CD4-positive, alpha-beta memory T cell (primary cell): ENCODE measurements at regions of chr12 and their contacts with region 1.

Region 1: GRCh38 chr12:110431957-110432587 is 18.1 kb downstream of the ARPC3 start:
- DNase-seq: no peak
- H3K4me3 ChIP-seq: peak overlapping the region in 1 of 2 donors; percentile 43
- H3K4me3 Mint-ChIP-seq: no peak overlapping the region
- H3K27ac ChIP-seq: no peak overlapping the region
- H3K27ac Mint-ChIP-seq: peak overlapping the region in 4 of 7 donors; percentile 18 to 99 (median 55)
- H3K4me1 ChIP-seq: peaks cover 4% of the 10 kb centered on the region
- H3K4me1 Mint-ChIP-seq: peaks cover 2 to 12% (median 3%) of the 10 kb centered on the region in 4 donors
- H3K27me3 ChIP-seq: no peaks in the 10 kb centered on the region
- H3K27me3 Mint-ChIP-seq: no peaks in the 10 kb centered on the region

Region 2: DNA sequence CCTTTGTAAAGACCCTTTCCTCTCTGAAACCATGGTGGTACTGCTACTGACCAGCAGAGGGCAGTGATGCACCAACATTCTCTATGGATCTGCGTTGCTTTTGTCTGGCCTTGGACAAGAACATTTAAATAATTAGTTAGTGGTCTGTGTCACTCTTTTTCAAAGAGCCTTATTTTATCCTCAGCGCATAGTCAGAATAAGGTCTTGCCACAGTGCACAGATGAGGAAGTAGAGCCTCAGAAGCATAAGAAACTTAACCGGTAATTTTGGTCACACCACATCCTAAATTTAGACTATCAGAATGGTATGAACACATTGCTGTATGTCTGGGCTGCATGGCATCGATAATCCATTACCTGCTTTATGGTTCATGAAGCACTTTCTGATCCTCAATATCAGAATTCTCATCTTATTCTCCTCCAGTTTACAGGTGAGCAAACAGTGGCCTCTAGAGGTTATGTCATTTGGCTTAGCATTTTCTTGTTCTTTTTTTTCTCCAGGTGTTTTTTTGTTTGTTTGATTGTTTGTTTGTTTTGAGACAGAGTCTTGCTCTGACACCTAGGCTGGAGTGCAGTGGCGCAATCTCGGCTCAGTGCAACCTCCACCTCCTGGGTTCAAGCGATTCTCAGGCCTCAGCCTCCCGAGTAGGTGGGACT is 331.6 kb before region 1 on chr12:
- CTCF ChIA-PET with region 1: interaction called, 67 read pairs
- POLR2A ChIA-PET with region 1: interaction called, 11 read pairs
- intact Hi-C with region 1: loop called (anchors 1 kb)
- DNase-seq: peak; percentile 52 to 60 (median 56)
- H3K4me3 ChIP-seq: no peak overlapping the region
- H3K4me3 Mint-ChIP-seq: peak overlapping the region in 2 of 8 donors; percentile 11 to 64
- H3K27ac ChIP-seq: no peak overlapping the region
- H3K27ac Mint-ChIP-seq: peak overlapping the region in 6 of 7 donors; percentile 0 to 43 (median 16)
- H3K4me1 ChIP-seq: peaks cover 6% of the 10 kb centered on the region
- H3K4me1 Mint-ChIP-seq: peaks cover 5 to 8% (median 6%) of the 10 kb centered on the region in 4 donors
- H3K27me3 ChIP-seq: no peaks in the 10 kb centered on the region
- H3K27me3 Mint-ChIP-seq: no peaks in the 10 kb centered on the region

Region 3: DNA sequence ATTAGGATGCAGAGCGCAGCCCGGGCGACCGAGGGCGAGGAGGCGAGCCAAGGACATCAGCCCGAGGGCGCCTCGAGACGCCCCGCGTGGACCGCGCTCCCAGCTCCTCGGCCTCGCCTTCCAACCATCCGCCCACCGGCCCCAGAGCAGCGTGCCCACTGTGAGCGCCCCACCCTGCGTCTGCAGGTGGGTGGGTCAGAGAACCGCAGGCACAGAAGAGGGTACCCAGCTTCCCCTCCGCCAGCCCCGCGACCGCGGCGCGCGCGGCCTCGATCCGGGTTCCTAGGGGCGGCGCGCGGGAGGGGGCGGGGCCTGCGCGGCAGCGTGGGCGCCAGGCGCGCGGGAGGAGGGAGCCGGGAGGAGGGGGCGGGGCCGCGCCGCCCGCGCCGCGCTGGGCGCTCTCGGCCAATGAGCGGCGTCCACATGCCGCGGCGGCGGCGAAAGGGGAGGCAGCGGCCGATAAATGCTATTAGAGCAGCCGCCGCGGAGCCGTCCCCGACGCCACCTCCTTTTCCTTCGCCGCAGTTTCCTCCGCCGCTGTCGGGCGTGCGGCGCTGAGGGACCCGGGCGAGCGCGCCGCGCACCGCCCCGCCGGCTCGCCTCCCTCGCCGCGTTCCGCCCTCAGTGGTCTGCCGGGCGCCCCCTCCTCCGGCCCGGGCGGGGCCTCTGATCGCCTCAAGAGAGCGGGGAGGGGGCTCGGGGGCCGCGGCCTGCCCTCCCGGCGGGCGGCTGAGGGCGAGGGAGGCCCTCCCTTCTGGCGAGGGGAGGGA is 151.1 kb before region 1 on chr12 and contains the start of gene ATP2A2:
- CTCF ChIA-PET with region 1: interaction called, 11 read pairs
- POLR2A ChIA-PET with region 1: interaction called, 25 read pairs
- intact Hi-C with region 1: loop called (anchors 1 kb)
- DNase-seq: peak; percentile 89 to 93 (median 92)
- H3K4me3 ChIP-seq: peak within 1 kb of the TSS; percentile 87 to 88
- H3K4me3 Mint-ChIP-seq: peak within 1 kb of the TSS; percentile 91 to 98 (median 94)
- H3K27ac ChIP-seq: peak within 1 kb of the TSS; percentile 85
- H3K27ac Mint-ChIP-seq: peak within 1 kb of the TSS; percentile 90 to 98 (median 94)
- H3K4me1 ChIP-seq: peaks cover 47% of the 10 kb centered on the region
- H3K4me1 Mint-ChIP-seq: peaks cover 36 to 53% (median 43%) of the 10 kb centered on the region in 4 donors
- H3K27me3 ChIP-seq: no peaks in the 10 kb centered on the region
- H3K27me3 Mint-ChIP-seq: no peaks in the 10 kb centered on the region
- total RNA-seq, gene ATP2A2: 90.4 to 91.0 TPM

Region 4: GRCh38 chr12:110355073-110355472 is 77.0 kb before region 1 on chr12:
- CTCF ChIA-PET with region 1: interaction called, 25 read pairs
- POLR2A ChIA-PET with region 1: no interaction called
- intact Hi-C with region 1: loop called (anchors 2 kb)
- DNase-seq: peak in 3 of 5 donors; percentile 15 to 22 (median 15)
- H3K4me3 ChIP-seq: no peak overlapping the region
- H3K4me3 Mint-ChIP-seq: peak overlapping the region in 3 of 8 donors; percentile 5 to 39 (median 18)
- H3K27ac ChIP-seq: no peak overlapping the region
- H3K27ac Mint-ChIP-seq: peak overlapping the region in 2 of 7 donors; percentile 19 to 30
- H3K4me1 ChIP-seq: peaks cover 3% of the 10 kb centered on the region
- H3K4me1 Mint-ChIP-seq: peaks cover 14 to 24% (median 20%) of the 10 kb centered on the region in 4 donors
- H3K27me3 ChIP-seq: no peaks in the 10 kb centered on the region
- H3K27me3 Mint-ChIP-seq: no peaks in the 10 kb centered on the region

Region 5: GRCh38 chr12:110403146-110403975 is 28.7 kb before region 1 on chr12 and contains the start of gene ANAPC7:
- CTCF ChIA-PET with region 1: interaction called, 32 read pairs
- POLR2A ChIA-PET with region 1: interaction called, 12 read pairs
- intact Hi-C with region 1: loop called (anchors 1 kb)
- DNase-seq: peak; percentile 88 to 90 (median 89)
- H3K4me3 ChIP-seq: peak within 1 kb of the TSS; percentile 80 to 93
- H3K4me3 Mint-ChIP-seq: peak within 1 kb of the TSS; percentile 98 to 100 (median 100)
- H3K27ac ChIP-seq: peak within 1 kb of the TSS; percentile 82
- H3K27ac Mint-ChIP-seq: peak within 1 kb of the TSS in 6 of 7 donors; percentile 98 to 99 (median 99)
- H3K4me1 ChIP-seq: peaks cover 32% of the 10 kb centered on the region
- H3K4me1 Mint-ChIP-seq: peaks cover 18 to 44% (median 30%) of the 10 kb centered on the region in 4 donors
- H3K27me3 ChIP-seq: no peaks in the 10 kb centered on the region
- H3K27me3 Mint-ChIP-seq: no peaks in the 10 kb centered on the region
- total RNA-seq, gene ANAPC7: 69.9 to 70.1 TPM

Region 6: GRCh38 chr12:110444455-110444854 is 12.4 kb after region 1 on chr12:
- CTCF ChIA-PET with region 1: interaction called, 35 read pairs
- POLR2A ChIA-PET with region 1: interaction called, 26 read pairs
- intact Hi-C with region 1: no loop called
- DNase-seq: no peak
- H3K4me3 ChIP-seq: no peak overlapping the region
- H3K4me3 Mint-ChIP-seq: peak overlapping the region in 1 of 8 donors; percentile 3
- H3K27ac ChIP-seq: no peak overlapping the region
- H3K27ac Mint-ChIP-seq: peak overlapping the region in 2 of 7 donors; percentile 3 to 75
- H3K4me1 ChIP-seq: peaks cover 34% of the 10 kb centered on the region
- H3K4me1 Mint-ChIP-seq: peaks cover 19 to 40% (median 27%) of the 10 kb centered on the region in 4 donors
- H3K27me3 ChIP-seq: no peaks in the 10 kb centered on the region
- H3K27me3 Mint-ChIP-seq: no peaks in the 10 kb centered on the region

Region 7: GRCh38 chr12:110468212-110469048 is 36.4 kb after region 1 on chr12 and contains the starts of genes FAM216A and GPN3:
- CTCF ChIA-PET with region 1: interaction called, 12 read pairs
- POLR2A ChIA-PET with region 1: interaction called, 16 read pairs
- intact Hi-C with region 1: no loop called
- DNase-seq: peak; percentile 97 to 98 (median 98)
- H3K4me3 ChIP-seq: peak within 1 kb of the TSS; percentile 93 to 97
- H3K4me3 Mint-ChIP-seq: peak within 1 kb of the TSS; percentile 96 to 100 (median 98)
- H3K27ac ChIP-seq: peak within 1 kb of the TSS; percentile 75
- H3K27ac Mint-ChIP-seq: peak within 1 kb of the TSS; percentile 91 to 98 (median 96)
- H3K4me1 ChIP-seq: peaks cover 25% of the 10 kb centered on the region
- H3K4me1 Mint-ChIP-seq: peaks cover 17 to 45% (median 34%) of the 10 kb centered on the region in 4 donors
- H3K27me3 ChIP-seq: no peaks in the 10 kb centered on the region
- H3K27me3 Mint-ChIP-seq: no peaks in the 10 kb centered on the region
- total RNA-seq, gene FAM216A: 16.4 to 16.9 TPM
- total RNA-seq, gene GPN3: 12.5 to 16.6 TPM